Naive thymus-derived CD4-positive, alpha-beta T cell (primary cell): ENCODE measurements at regions of chr1 and their contacts with region 1.

Region 1: DNA sequence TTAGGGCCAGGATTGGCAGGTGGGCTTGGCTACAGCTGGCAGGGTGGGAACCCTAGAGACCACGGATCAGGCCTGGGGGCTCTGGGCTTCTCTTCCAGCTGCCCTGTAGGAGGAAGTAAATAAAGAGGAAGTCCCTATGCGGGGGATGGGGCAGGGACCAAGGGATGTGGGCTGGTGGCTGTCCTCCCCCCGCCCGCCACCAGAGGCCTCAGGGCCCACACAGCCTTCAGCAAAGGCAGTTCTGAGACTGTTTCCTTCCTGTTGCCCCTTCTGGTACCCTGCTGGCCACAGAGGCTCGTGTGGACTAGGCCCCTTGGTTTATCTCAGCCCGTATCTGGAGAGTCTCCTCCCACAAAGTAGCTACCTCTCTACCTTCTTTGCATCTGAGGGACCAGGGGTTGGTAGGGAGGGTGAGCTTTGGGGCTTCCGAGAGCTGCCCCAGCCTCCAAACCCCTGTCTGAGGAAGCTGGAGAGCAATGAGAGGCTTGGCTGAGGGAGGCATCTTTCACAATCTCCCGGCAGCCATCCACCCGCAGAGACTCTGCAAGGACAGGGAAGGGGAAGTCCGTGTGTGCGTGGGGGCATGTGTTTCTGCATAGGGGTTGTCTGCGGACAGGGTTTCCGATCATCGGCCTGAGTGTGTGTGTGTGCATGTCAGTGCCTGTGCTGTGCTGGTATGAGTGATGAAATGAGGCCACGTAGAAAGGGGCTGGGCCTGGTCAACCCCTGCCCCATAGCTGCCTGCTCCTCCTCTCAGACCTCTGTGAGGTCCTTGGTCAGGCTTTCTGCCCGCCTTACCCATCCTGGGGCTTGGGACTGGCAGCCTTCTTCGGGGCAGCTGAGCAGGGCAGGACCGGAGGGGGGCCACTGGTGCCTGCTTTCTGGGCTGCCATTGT is 12.5 kb downstream of the RPS6KA1 start:
- DNase-seq: peak; percentile 56 to 84 (median 66)
- ATAC-seq: peak; percentile 72
- H3K4me3 ChIP-seq: peak overlapping the region; percentile 33
- H3K4me3 Mint-ChIP-seq: peak overlapping the region; percentile 75 to 91 (median 84)
- H3K27ac ChIP-seq: peak overlapping the region; percentile 71
- H3K27ac Mint-ChIP-seq: peak overlapping the region; percentile 82 to 99 (median 96)
- H3K4me1 ChIP-seq: peaks cover 77 to 89% of the 10 kb centered on the region in 2 donors
- H3K4me1 Mint-ChIP-seq: peaks cover 80 to 94% (median 83%) of the 10 kb centered on the region in 7 donors
- H3K27me3 ChIP-seq: no peaks in the 10 kb centered on the region
- H3K27me3 Mint-ChIP-seq: no peaks in the 10 kb centered on the region

Region 2: GRCh38 chr1:26529655-26530409 is 12.2 kb before region 1 on chr1 and contains the start of gene RPS6KA1:
- CTCF ChIA-PET with region 1: interaction called, 4 read pairs
- POLR2A ChIA-PET with region 1: interaction called, 42 read pairs
- intact Hi-C with region 1: loop called (anchors 1 to 2 kb)
- DNase-seq: peak; percentile 28 to 81 (median 57)
- ATAC-seq: peak; percentile 93
- H3K4me3 ChIP-seq: peak within 1 kb of the TSS; percentile 48
- H3K4me3 Mint-ChIP-seq: peak within 1 kb of the TSS; percentile 80 to 95 (median 90)
- H3K27ac ChIP-seq: peak within 1 kb of the TSS; percentile 75
- H3K27ac Mint-ChIP-seq: peak within 1 kb of the TSS; percentile 69 to 96 (median 85)
- H3K4me1 ChIP-seq: peaks cover 16 to 20% of the 10 kb centered on the region in 2 donors
- H3K4me1 Mint-ChIP-seq: peaks cover 16 to 35% (median 27%) of the 10 kb centered on the region in 7 donors
- H3K27me3 ChIP-seq: no peaks in the 10 kb centered on the region
- H3K27me3 Mint-ChIP-seq: peaks cover 0 to 7% (median 0%) of the 10 kb centered on the region in 5 donors
- total RNA-seq, gene RPS6KA1: 53.8 to 205 (median 97.6) TPM

Region 3: DNA sequence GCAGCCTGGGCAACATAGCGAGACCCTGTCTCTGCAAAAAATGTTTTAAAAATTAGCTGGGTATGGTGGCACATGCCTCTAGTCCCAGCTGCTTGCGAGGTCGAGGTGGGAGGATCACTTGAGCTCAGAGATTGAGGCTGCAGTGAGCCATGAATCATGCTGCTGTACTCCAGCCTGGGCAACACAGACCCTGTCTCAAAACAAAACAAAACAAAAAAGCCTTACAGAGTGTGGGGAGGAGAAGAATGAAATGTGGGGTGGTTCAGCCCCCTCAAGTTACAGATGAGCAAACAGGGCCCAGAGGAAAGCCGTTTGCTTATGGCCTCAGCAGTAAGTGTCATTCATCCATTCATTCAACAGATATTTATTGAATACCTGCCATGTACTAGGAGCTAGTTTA is 28.2 kb after region 1 on chr1:
- CTCF ChIA-PET with region 1: interaction called, 4 read pairs
- POLR2A ChIA-PET with region 1: interaction called, 3 read pairs
- intact Hi-C with region 1: loop called in 1 of 2 experiments (anchors 2 kb)
- DNase-seq: no peak
- ATAC-seq: no peak
- H3K4me3 ChIP-seq: no peak overlapping the region
- H3K4me3 Mint-ChIP-seq: no peak overlapping the region
- H3K27ac ChIP-seq: peak overlapping the region; percentile 8
- H3K27ac Mint-ChIP-seq: peak overlapping the region in 8 of 9 donors; percentile 19 to 81 (median 62)
- H3K4me1 ChIP-seq: no peaks in the 10 kb centered on the region
- H3K4me1 Mint-ChIP-seq: peaks cover 4 to 20% (median 11%) of the 10 kb centered on the region in 7 donors
- H3K27me3 ChIP-seq: no peaks in the 10 kb centered on the region
- H3K27me3 Mint-ChIP-seq: no peaks in the 10 kb centered on the region